ENCODE measurements at regions of chr1 and their contacts with region 1.

Region 1: DNA sequence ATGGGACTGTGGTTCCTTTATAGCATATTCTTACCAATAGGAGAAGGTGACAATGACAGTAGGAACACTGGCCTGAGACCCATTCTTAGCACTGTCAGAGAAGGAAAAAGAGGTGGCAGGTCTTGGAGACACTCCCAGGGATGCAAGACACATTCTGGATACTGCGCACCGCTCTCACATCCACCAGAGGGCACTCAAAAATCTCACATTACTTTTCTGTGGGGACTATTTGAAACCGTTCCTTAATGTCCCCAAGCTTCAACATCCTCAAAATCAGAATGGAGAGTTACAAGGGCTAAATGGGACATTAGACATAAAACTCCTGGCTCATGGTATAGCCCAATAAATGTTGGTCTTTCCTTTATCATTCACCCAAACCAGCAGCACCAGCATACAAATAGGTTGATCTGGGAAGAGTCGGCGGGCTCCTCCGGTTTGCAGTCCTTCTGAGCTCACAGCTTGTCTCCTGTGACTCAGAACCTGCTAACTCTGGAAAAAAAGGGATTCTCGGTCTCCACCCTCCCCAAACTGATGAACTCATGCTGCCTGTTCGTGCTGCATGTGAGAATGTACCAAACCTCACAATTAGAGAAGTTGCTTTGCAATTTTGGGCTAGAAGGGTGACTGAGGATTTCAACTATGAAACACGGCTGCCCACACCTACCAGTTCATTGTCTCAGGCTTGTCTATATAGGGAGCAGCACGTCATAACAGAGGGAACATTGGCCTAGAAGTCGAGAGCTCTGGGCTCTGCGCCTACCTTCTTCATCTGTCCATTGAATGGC is 40.2 kb downstream of the IL12RB2 start:
- DNase-seq: peak; percentile 26 to 59 (median 56)
- H3K4me3 ChIP-seq: no peak overlapping the region
- H3K27ac ChIP-seq: no peak overlapping the region
- H3K4me1 ChIP-seq: no peaks in the 10 kb centered on the region
- H3K27me3 ChIP-seq: no peaks in the 10 kb centered on the region

Region 2: GRCh38 chr1:67332653-67333529 is 15.0 kb before region 1 on chr1:
- CTCF ChIA-PET with region 1: interaction called, 14 read pairs
- POLR2A ChIA-PET with region 1: no interaction called
- DNase-seq: no peak
- H3K4me3 ChIP-seq: no peak overlapping the region
- H3K27ac ChIP-seq: no peak overlapping the region
- H3K4me1 ChIP-seq: peaks cover 0 to 4% (median 0%) of the 10 kb centered on the region in 4 experiments
- H3K27me3 ChIP-seq: no peaks in the 10 kb centered on the region

Region 3: DNA sequence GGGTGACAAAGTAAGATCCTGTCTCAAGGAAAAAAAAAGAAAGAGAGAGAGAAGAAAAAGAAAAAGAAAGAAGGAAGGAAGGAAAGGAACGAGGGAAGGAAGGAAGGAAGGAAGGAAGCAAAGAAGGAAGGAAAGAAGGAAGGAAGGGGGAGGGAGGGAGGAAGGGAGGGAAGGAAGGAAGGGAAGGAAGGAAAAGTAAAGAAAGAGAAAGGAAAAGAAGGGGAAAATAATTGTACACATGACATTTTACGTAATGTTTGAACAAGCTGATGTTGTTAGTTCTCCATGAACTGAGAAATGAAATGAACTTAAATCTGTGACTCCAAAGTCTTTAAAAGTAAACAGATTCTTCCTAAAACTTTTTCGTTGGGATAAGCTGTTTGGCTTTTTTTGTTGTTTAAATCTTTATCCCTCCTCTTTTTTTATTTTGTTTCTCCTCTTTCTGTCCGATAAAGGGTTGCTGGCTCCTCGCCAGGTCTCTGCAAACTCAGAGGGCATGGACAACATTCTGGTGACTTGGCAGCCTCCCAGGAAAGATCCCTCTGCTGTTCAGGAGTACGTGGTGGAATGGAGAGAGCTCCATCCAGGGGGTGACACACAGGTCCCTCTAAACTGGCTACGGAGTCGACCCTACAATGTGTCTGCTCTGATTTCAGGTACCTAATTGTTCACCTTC is 19.6 kb after region 1 on chr1:
- CTCF ChIA-PET with region 1: no interaction called
- POLR2A ChIA-PET with region 1: no interaction called
- DNase-seq: peak in 2 of 3 donors; percentile 8 to 11
- H3K4me3 ChIP-seq: no peak overlapping the region
- H3K27ac ChIP-seq: no peak overlapping the region
- H3K4me1 ChIP-seq: no peaks in the 10 kb centered on the region
- H3K27me3 ChIP-seq: no peaks in the 10 kb centered on the region

Region 4: GRCh38 chr1:67489643-67490042 is 141.8 kb after region 1 on chr1:
- CTCF ChIA-PET with region 1: interaction called, 56 read pairs
- POLR2A ChIA-PET with region 1: no interaction called
- DNase-seq: peak; percentile 53 to 70 (median 69)
- H3K4me3 ChIP-seq: no peak overlapping the region
- H3K27ac ChIP-seq: no peak overlapping the region
- H3K4me1 ChIP-seq: no peaks in the 10 kb centered on the region
- H3K27me3 ChIP-seq: no peaks in the 10 kb centered on the region

Measured in common myeloid progenitor, CD34-positive (primary cell).